Activated naive CD8-positive, alpha-beta T cell treated with anti-CD3 and anti-CD28 coated beads, Interleukin-2, amount 10 ng/mL, durations not matched to agents 7 days and 5 days (primary cell): ENCODE measurements at regions of chr7 and their contacts with region 1.

Region 1: DNA sequence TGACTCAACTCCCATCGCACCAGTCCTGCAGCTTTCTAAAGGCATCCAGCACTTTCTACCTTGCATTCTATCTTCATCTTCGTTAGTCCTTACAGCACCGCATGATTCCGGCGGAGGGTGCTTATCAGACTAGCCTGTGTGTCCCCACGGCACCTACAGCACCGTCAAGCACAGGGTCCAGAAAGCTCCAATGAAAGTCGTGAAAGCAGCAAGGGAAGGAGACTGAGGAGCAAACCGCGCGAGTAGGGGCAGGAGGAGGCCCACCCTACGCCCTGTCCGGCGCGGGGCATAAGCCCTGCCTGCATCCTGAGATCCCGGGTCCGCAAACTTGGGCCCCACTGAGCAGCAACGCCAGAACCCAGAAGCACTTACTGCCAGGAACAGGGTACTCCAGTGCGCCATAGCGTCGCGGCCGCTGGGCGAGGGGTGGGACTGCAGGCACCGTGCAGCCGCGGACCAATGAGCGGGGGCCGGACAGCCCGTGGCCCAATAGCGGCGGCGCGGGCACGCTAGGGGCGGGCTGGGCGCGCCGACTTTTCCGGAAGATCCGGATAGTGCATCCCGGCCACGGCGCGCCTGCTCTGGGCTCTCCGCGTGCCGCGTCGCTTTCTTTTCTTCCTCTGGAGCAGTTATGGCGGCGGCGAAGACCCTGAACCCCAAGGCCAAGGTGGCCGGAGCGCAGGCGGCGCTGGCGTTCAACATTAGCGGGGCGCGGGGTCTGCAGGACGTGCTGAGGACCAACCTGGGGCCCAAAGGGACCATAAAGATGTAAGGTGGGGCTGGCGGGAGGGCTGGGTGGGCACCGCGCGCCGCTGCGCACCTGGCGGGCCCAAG is 122.1 kb upstream of the VKORC1L1 start:
- DNase-seq: peak; percentile 92
- ATAC-seq: peak; percentile 99
- H3K4me3 Mint-ChIP-seq: peak overlapping the region; percentile 94
- H3K27ac Mint-ChIP-seq: peak overlapping the region; percentile 91
- H3K4me1 Mint-ChIP-seq: peaks cover 9% of the 10 kb centered on the region
- H3K27me3 Mint-ChIP-seq: no peaks in the 10 kb centered on the region

Region 2: DNA sequence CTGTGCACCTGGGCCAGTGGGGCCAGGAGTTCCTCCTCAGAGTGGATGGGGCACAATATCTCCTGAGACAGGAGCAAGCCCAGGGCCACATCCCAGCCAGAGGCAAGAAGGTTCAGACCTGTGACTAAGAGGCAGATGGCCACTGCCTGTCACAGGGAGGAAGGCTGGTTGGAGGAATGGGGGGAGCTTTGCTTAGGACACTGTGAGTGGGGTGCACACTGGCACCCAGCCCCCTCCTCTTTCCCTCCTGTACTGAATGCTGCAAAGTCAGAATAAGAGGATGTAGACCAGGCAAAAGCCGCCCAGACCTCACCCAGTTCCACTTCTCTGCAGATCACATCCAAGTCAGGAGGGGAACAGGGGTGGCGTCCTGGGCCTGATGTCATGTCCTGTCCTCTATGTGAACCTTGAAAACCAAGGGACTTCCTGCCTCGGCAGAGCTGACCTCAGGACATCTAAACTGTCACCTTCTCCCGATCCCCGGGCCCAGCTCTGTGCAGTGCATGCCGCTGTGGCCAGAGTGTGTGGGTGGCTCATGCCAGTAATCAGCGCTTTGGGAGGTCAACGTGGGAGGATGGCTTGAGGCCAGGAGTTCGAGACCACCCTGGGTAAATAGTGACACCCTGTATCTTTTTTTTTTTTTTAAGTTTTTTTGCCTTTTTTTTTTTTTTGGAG is 230.0 kb after region 1 on chr7:
- POLR2A ChIA-PET with region 1: interaction called, 12 read pairs
- DNase-seq: peak; percentile 70
- ATAC-seq: peak; percentile 84
- H3K4me3 Mint-ChIP-seq: peak overlapping the region; percentile 92
- H3K27ac Mint-ChIP-seq: peak overlapping the region; percentile 92
- H3K4me1 Mint-ChIP-seq: peaks cover 4% of the 10 kb centered on the region
- H3K27me3 Mint-ChIP-seq: no peaks in the 10 kb centered on the region

Region 3: DNA sequence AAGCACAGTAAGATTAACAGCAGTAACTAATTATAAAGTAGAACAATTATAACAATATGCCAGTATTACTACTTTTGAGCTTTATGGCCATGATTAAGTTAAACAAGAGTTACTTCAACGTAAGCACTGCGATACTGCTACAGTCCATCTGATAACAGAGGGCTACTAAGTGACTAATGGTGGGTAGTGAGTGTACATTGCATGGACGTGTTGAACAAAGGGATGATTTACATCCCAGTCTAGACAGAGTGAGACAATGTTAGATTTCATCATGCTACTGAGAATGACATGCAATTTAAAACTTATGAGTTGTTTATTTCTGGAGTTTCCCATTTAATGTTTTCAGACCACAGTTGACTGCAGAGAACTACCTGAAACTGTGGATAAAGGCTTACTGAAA is 500.0 kb after region 1 on chr7:
- POLR2A ChIA-PET with region 1: no interaction called
- DNase-seq: no peak
- ATAC-seq: no peak
- H3K4me3 Mint-ChIP-seq: no peak overlapping the region
- H3K27ac Mint-ChIP-seq: no peak overlapping the region
- H3K4me1 Mint-ChIP-seq: no peaks in the 10 kb centered on the region
- H3K27me3 Mint-ChIP-seq: no peaks in the 10 kb centered on the region